K562 (cell line): ENCODE measurements at regions of chr10 and their contacts with region 1.

Region 1: DNA sequence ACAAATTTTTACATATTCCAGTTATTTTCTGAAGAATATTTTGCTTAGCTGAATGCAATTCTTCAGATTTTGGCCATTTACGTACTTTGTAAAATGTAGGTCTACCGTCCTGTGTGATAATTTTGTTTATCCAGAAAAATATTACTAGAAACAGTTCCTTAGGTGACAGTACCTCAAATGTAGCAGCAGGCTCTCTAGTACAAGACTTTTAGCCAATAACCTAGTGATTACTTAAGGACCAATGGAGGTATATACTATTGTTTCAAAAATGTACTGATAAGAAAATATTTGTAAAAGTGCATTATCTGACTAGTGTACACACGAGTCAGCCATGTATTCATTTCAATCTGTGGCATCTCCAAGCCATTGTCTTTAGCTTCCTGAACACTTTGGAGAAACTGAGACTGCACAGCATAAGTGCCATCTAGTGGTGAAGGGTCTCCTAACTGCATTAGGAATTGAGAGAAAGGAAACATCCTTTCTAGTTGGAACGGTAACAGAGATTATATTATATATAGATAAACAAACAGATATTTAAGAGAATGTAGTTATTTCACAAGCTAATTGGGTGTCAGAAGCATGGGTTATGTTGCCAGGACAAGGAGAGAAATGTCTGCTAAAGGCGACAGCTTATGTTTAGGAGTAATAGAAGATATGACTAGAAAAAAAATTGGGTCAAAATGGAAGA is 23.7 kb downstream of the RTKN2 start:
- DNase-seq: peak; percentile 14 to 67 (median 31)
- ATAC-seq: peak; percentile 83
- H3K4me3 ChIP-seq: no peak overlapping the region
- H3K27ac ChIP-seq: no peak overlapping the region
- H3K4me1 ChIP-seq: no peaks in the 10 kb centered on the region
- H3K27me3 ChIP-seq: no peaks in the 10 kb centered on the region
- CTCF ChIP-seq: peak; percentile 67 to 81 (median 74)
- EP300 ChIP-seq: no peak
- POLR2A ChIP-seq: no peak
- RAD21 ChIP-seq: peak; percentile 82 to 90

Region 2: DNA sequence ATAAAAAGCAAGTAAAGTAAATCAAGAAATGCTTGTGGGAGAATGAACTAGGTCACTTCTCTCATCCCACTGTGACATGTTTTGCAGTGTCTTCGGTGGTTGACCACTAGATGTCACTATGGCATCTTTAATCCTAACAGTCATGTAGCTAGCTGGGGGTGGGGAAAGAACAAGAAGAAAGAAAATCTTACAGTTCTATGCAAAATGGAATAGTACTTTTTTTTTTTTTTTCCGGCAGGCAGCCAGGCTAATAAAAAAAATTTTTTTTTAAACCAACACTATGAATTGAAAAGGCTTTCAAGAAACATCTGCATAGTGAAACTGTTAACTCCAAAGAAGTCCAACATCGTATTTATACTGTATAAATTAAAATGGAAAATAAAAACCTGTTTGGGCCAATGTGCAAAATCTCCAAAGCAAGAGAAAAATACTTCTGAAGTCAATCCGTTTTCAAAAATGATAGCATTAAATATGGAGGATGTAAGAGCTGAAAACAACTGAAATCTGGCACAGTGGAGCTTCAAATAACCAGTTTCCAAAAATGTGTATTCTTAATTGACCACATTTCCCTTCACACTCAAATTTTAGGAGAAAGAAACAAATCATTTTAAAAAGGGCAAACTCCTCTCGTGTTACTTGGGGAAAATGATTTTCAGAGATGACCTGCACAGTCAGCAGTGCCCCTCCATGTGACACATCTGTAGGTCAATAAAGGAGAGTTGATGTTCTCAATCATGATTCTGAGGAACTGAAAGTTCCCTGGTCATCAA is 1428.1 kb before region 1 on chr10:
- CTCF ChIA-PET with region 1: no interaction called
- POLR2A ChIA-PET with region 1: no interaction called
- in situ Hi-C with region 1: no loop called
- intact Hi-C with region 1: loop called (anchors 5 kb)
- DNase-seq: peak; percentile 87 to 89 (median 88)
- ATAC-seq: peak; percentile 95
- H3K4me3 ChIP-seq: no peak overlapping the region
- H3K27ac ChIP-seq: no peak overlapping the region
- H3K4me1 ChIP-seq: no peaks in the 10 kb centered on the region
- H3K27me3 ChIP-seq: no peaks in the 10 kb centered on the region
- CTCF ChIP-seq: peak; percentile 80 to 93 (median 82)
- EP300 ChIP-seq: no peak
- POLR2A ChIP-seq: no peak
- RAD21 ChIP-seq: peak; percentile 95 to 98

Region 3: GRCh38 chr10:61475449-61475873 is 769.5 kb before region 1 on chr10:
- CTCF ChIA-PET with region 1: no interaction called
- POLR2A ChIA-PET with region 1: no interaction called
- in situ Hi-C with region 1: no loop called
- intact Hi-C with region 1: loop called (anchors 5 kb)
- DNase-seq: peak in 2 of 4 experiments; percentile 63 to 79
- ATAC-seq: peak; percentile 67
- H3K4me3 ChIP-seq: no peak overlapping the region
- H3K27ac ChIP-seq: peak overlapping the region; percentile 41; the same call in 1 of the 3 replicates
- H3K4me1 ChIP-seq: peaks cover 0 to 5% of the 10 kb centered on the region in 2 experiments; a peak in 2 of 5 replicates
- H3K27me3 ChIP-seq: no peaks in the 10 kb centered on the region
- CTCF ChIP-seq: no peak
- EP300 ChIP-seq: peak; percentile 81
- POLR2A ChIP-seq: no peak
- RAD21 ChIP-seq: no peak; a peak in 1 of 4 replicates

Region 4: GRCh38 chr10:62038609-62039190 is 206.2 kb before region 1 on chr10:
- CTCF ChIA-PET with region 1: interaction called, 10 read pairs
- POLR2A ChIA-PET with region 1: interaction called, 4 read pairs
- in situ Hi-C with region 1: loop called (anchors 10 kb)
- intact Hi-C with region 1: loop called (anchors 1 kb)
- DNase-seq: peak; percentile 56 to 79 (median 66)
- ATAC-seq: peak; percentile 86
- H3K4me3 ChIP-seq: no peak overlapping the region
- H3K27ac ChIP-seq: no peak overlapping the region
- H3K4me1 ChIP-seq: no peaks in the 10 kb centered on the region
- H3K27me3 ChIP-seq: peaks cover 3 to 9% of the 10 kb centered on the region in 2 experiments; a peak in 2 of 5 replicates
- CTCF ChIP-seq: peak; percentile 76 to 85 (median 78)
- EP300 ChIP-seq: no peak
- POLR2A ChIP-seq: no peak
- RAD21 ChIP-seq: peak; percentile 84 to 87

Region 5: GRCh38 chr10:62199584-62199983 is 45.3 kb before region 1 on chr10:
- CTCF ChIA-PET with region 1: no interaction called
- POLR2A ChIA-PET with region 1: no interaction called
- in situ Hi-C with region 1: no loop called
- intact Hi-C with region 1: loop called (anchors 5 kb)
- DNase-seq: no peak
- ATAC-seq: no peak
- H3K4me3 ChIP-seq: no peak overlapping the region
- H3K27ac ChIP-seq: no peak overlapping the region
- H3K4me1 ChIP-seq: no peaks in the 10 kb centered on the region
- H3K27me3 ChIP-seq: no peaks in the 10 kb centered on the region
- CTCF ChIP-seq: no peak
- EP300 ChIP-seq: no peak
- POLR2A ChIP-seq: no peak
- RAD21 ChIP-seq: no peak